Calu3 (cell line): ENCODE measurements at regions of chr10 and their contacts with region 1.

Region 1: GRCh38 chr10:84613336-84614021 is 285.1 kb downstream of the CCSER2 start:
- DNase-seq: peak; percentile 56
- H3K4me3 Mint-ChIP-seq: no peak overlapping the region
- H3K27ac Mint-ChIP-seq: no peak overlapping the region
- H3K4me1 Mint-ChIP-seq: no peaks in the 10 kb centered on the region
- H3K27me3 Mint-ChIP-seq: peaks cover 48% of the 10 kb centered on the region
- CTCF ChIP-seq: peak; percentile 44

Region 2: DNA sequence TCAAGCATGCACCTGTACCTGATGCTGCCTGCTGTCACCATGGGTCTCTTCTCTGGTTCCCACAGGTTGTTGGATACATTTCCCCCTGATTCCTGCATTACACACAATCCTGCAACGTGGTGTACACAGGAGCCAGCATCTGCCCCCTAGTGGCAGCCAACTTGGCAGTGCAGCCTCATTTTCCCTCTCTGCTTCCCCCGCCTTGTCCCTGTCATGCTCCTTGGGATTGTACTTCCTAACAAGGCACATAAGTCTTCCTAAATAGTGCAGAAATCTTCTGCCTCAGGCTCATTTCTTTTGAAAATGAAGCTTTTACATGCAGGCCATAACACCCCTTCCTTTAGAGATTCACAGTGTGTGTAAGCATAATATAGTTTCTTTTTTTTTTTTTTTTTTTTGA is 102.4 kb after region 1 on chr10:
- CTCF ChIA-PET with region 1: no interaction called
- intact Hi-C with region 1: loop called (anchors 1 kb)
- DNase-seq: peak; percentile 34
- H3K4me3 Mint-ChIP-seq: no peak overlapping the region
- H3K27ac Mint-ChIP-seq: no peak overlapping the region
- H3K4me1 Mint-ChIP-seq: no peaks in the 10 kb centered on the region
- H3K27me3 Mint-ChIP-seq: peaks cover 16% of the 10 kb centered on the region
- CTCF ChIP-seq: peak; percentile 20

Region 3: DNA sequence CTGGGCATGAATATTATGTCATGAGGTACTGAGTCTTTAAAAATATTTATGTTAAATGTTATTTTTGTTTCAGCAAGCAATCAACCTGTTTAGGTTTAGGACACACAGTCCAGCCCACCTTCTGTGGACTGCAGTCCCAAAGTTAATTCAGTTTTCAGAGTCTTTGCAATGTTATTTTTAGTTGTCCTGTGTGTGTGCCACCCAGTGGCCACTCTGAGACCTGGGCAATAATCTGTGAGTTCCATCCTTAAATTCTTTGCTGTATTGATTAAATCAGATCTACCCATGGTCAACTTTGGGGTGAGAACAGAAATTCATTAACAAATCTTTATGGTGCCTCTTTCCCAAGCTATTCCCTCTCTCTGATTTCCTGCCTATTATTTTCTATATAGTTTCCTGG is 130.0 kb after region 1 on chr10:
- CTCF ChIA-PET with region 1: interaction called, 7 read pairs
- intact Hi-C with region 1: loop called (anchors 1 kb)
- DNase-seq: no peak
- H3K4me3 Mint-ChIP-seq: no peak overlapping the region
- H3K27ac Mint-ChIP-seq: no peak overlapping the region
- H3K4me1 Mint-ChIP-seq: no peaks in the 10 kb centered on the region
- H3K27me3 Mint-ChIP-seq: no peaks in the 10 kb centered on the region
- CTCF ChIP-seq: peak; percentile 28